ENCODE measurements at regions of chr1 and their contacts with region 1.

Region 1: DNA sequence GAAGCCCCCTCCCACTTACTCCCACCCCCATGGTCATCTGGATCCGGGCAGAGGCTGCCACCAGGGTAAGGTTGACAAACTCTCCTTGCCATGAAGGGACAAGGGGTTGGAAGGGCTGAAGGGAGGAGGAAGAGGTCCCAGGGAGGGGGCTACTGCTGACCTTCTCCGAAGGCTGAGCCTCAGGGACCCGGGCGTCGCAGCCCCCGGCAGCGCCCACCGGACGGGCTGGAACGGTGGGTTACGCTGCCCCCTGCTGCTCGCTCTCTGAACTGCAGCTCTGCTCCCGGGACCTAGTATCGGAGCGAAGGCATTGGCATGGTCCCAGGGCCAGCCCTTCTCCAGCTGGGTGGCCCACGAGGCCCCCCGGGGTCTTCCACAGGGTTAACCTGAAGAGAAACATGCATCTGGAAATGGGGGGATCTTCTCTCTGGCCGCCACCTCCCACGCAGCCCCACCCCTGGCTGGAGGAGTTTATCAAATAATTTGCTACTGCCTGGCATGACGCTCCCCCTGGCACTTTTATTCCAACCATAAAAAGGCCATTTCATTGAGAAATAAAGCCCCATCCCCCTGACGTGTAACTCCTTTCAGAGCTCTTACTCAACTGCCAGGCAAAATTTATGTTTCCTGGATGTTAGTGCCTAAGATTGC is 70.4 kb upstream of the TARDBP start:
- DNase-seq: peak; percentile 25 to 78 (median 51)
- H3K4me3 ChIP-seq: no peak overlapping the region
- H3K27ac ChIP-seq: no peak overlapping the region
- H3K4me1 ChIP-seq: peaks cover 3% of the 10 kb centered on the region
- H3K27me3 ChIP-seq: no peaks in the 10 kb centered on the region
- CTCF ChIP-seq: peak; percentile 41 to 57 (median 46)
- EP300 ChIP-seq: no peak
- POLR2A ChIP-seq: no peak

Region 2: DNA sequence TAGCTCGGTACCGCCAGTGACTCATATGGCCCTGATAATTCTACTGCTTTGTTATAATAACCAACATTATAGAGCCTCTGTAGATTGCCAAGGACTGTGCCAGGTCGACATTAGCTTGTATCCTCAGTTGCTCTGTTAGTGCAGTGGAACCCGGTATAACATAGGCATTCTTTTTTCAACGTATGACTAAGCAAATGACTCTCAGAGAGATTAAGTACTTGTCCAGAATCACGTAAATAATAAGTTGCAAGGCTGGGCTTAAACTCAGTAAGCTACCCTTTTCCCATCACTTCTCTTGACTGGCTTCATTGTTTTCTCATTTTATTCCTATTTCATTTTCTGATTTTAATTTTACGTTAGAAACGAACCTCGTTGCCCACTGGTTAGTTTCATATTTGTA is 824.2 kb before region 1 on chr1:
- intact Hi-C with region 1: no loop called
- DNase-seq: no peak
- H3K4me3 ChIP-seq: no peak overlapping the region
- H3K27ac ChIP-seq: no peak overlapping the region
- H3K4me1 ChIP-seq: no peaks in the 10 kb centered on the region
- H3K27me3 ChIP-seq: no peaks in the 10 kb centered on the region
- CTCF ChIP-seq: no peak
- EP300 ChIP-seq: no peak
- POLR2A ChIP-seq: no peak

Region 3: DNA sequence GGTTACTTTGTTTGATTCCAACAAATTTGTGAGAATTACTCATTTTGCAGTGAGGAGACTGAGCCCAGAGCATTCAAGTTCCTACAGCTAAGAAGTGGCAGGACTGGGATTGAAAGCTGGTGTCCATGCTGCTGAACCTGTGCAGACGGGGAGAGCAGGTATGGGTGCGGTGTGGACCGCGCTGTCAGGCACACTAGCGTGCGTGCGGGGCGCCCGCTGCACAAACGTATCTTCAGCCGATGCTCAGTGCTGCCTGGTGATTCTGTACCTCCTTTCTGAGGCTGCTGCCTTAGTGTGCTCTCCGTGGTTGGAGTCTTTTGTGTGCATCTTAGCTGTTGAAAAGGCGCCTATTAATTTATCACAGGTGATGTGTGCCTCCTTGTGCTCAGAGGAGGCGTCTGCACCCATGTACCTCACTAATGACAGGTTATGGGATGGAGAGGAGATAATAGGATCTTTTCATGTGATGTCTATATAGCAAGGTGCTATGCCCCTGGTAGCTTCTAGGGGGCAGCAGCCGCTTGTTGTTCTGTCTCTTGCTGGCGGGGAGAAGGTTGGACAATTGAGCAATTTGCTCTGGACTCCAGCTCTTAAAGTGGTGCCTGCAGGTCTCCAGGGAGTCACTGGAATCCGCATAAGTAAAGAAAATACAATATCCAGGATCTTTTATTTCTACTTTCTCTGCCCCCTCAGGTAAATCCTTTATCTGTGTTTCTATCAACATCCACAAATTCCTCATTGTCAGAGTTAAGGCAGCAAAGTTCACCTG is 434.7 kb before region 1 on chr1:
- intact Hi-C with region 1: loop called in 1 of 4 experiments (anchors 5 kb)
- DNase-seq: peak; percentile 29 to 67 (median 48)
- H3K4me3 ChIP-seq: no peak overlapping the region
- H3K27ac ChIP-seq: no peak overlapping the region
- H3K4me1 ChIP-seq: peaks cover 2% of the 10 kb centered on the region
- H3K27me3 ChIP-seq: no peaks in the 10 kb centered on the region
- CTCF ChIP-seq: peak; percentile 30 to 53 (median 51)
- EP300 ChIP-seq: no peak
- POLR2A ChIP-seq: no peak